Astrocyte of the cerebellum (primary cell): ENCODE measurements at regions of chr1 and their contacts with region 1.

Region 1: GRCh38 chr1:9186082-9186859 is 48.3 kb upstream of the H6PD start:
- DNase-seq: no peak
- H3K4me3 ChIP-seq: no peak overlapping the region
- CTCF ChIP-seq: no peak

Region 2: DNA sequence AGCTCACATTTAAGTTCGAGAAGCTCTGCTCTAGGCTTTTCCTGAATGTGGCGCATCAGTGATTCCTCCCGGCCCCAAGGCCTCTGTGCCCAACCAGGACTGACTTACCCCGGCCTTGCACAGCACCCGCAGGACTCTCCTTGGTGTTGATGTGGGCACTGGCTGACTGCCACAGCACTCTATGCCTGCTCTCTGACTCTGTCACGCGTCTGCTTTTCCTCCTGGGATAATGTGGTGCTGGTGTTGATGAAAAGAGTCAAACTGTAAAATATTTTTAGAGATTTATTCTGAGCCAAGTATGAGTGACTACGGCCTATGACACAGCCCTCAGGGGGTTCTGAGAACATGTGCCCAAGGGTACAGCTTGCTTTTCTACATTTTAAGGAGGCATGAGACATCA is 101.4 kb before region 1 on chr1:
- in situ Hi-C with region 1: loop called (anchors 5 kb)
- DNase-seq: no peak
- H3K4me3 ChIP-seq: no peak overlapping the region
- CTCF ChIP-seq: no peak

Region 3: DNA sequence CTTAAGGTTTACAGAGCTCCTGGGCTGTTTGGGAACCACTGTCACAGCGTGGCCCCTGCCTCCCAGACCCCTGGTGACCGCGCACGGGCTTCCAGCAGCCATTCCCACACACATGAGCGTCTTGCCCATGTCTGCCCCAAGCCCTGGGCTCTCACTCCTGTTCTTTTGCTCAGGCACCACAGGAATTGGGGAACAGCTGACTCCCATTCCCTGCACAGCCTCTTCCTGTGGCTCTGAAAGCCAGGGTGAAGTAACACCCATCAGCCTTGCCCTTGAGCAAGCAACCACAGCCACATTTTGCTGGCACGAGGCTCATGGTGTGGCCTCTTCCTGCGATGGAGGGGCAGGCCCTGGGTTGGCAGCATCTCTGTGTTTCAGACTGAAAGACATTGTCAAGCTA is 43.0 kb before region 1 on chr1:
- in situ Hi-C with region 1: loop called (anchors 5 kb)
- DNase-seq: no peak
- H3K4me3 ChIP-seq: no peak overlapping the region
- CTCF ChIP-seq: no peak

Region 4: GRCh38 chr1:9249534-9250410 is 63.5 kb after region 1 on chr1:
- in situ Hi-C with region 1: no loop called
- DNase-seq: no peak
- H3K4me3 ChIP-seq: no peak overlapping the region
- CTCF ChIP-seq: peak; percentile 60